ENCODE measurements at regions of chr12 and their contacts with region 1.

Region 1: GRCh38 chr12:68807576-68808387 is at the start of gene MDM2:
- DNase-seq: peak; percentile 88
- H3K4me3 ChIP-seq: peak within 1 kb of the TSS; percentile 69 to 98 (median 81)
- H3K27ac ChIP-seq: peak within 1 kb of the TSS; percentile 97
- H3K4me1 ChIP-seq: peaks cover 25% of the 10 kb centered on the region
- H3K27me3 ChIP-seq: no peaks in the 10 kb centered on the region
- CTCF ChIP-seq: peak; percentile 26 to 65
- total RNA-seq, gene MDM2: 304 to 321 TPM

Region 2: DNA sequence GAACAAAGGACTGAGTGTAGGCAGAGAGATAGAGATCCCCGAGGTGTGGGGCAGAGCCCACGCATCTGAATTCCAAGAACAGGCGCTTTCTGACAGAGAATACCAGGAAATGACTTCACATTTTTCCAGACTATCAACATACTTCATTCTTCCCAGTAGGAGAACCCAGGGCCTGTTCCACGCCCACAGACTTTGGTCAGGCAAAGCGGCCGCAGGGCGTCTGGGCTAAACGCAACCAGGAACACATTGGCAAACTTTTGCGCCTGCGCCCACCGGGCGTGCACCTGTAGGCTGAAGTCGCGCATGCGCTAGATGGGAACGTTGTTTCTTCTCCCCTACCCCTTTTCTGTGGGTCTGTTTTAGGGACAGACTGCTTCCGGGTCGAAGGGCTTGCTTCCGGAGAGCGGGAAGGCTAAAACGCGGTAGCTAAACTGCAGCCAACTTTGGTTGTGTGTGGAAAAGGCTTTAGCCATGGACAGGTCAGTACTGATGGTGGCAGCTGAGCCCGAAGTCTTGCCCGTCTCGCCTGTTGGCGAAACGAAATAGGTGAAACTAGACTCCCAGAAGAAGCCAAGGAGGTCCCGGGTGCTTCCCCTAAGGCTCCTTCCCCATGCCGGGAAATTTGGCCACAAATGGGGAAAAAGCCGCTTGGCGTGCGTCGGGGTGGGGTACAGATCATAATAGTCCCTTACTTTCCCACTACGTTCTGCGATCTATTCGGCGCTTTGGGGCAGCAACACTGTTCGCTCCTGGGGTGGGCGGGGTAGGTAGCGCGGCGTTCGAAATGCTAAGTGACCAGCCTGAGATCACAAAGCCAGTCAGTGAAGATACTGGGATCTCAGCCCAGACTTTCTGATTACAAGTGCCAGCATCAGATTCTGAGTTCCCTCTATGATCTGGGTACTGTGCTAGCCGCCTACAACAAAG is 120.9 kb before region 1 on chr12 and contains the start of gene NUP107:
- CTCF ChIA-PET with region 1: no interaction called
- dilution Hi-C with region 1: no loop called
- in situ Hi-C with region 1: no loop called
- intact Hi-C with region 1: loop called (anchors 1 kb)
- DNase-seq: peak; percentile 98
- H3K4me3 ChIP-seq: peak within 1 kb of the TSS; percentile 73 to 90 (median 89)
- H3K27ac ChIP-seq: peak within 1 kb of the TSS; percentile 91
- H3K4me1 ChIP-seq: peaks cover 17% of the 10 kb centered on the region
- H3K27me3 ChIP-seq: no peaks in the 10 kb centered on the region
- CTCF ChIP-seq: peak in 1 of 2 donors; percentile 39
- total RNA-seq, gene NUP107: 40.8 to 52.3 TPM

Region 3: DNA sequence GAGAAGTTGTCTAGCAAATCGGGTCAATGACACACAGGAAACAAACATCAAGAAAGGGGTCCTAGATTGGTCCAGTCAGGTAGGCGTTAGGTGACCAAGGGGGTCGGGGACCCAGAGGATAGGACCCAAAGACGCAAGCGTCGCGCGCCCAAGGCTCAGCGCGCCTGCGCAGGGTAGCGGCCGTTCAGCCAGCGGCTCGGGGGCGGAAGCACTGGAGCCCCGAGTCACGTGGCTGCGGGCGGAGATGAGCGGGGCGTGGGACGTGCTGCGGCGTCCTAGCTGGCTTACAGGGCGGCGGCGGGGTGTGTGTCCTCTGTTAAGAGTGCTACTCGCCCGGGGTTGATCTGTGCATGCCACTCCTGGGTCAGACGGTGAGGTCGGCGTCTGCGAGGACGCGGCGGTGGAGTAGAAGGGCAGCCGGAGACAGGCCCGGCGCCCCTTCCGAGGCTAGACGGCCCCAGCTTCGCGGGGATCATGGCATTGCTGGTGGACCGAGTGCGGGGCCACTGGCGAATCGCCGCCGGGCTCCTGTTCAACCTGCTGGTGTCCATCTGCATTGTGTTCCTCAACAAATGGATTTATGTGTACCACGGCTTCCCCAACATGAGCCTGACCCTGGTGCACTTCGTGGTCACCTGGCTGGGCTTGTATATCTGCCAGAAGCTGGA is 61.7 kb before region 1 on chr12 and contains the start of gene SLC35E3:
- CTCF ChIA-PET with region 1: no interaction called
- dilution Hi-C with region 1: no loop called
- in situ Hi-C with region 1: loop called in 1 of 2 experiments (anchors 10 kb)
- intact Hi-C with region 1: loop called (anchors 1 kb)
- DNase-seq: peak; percentile 89
- H3K4me3 ChIP-seq: peak within 1 kb of the TSS; percentile 63 to 90 (median 85)
- H3K27ac ChIP-seq: peak within 1 kb of the TSS; percentile 62
- H3K4me1 ChIP-seq: peaks cover 14% of the 10 kb centered on the region
- H3K27me3 ChIP-seq: no peaks in the 10 kb centered on the region
- CTCF ChIP-seq: no peak
- total RNA-seq, gene SLC35E3: 5.5 to 12.4 TPM

Region 4: GRCh38 chr12:68759852-68760251 is 47.9 kb before region 1 on chr12:
- CTCF ChIA-PET with region 1: no interaction called
- dilution Hi-C with region 1: no loop called
- in situ Hi-C with region 1: loop called in 1 of 2 experiments (anchors 10 kb)
- intact Hi-C with region 1: loop called (anchors 5 kb)
- DNase-seq: no peak
- H3K4me3 ChIP-seq: no peak overlapping the region
- H3K27ac ChIP-seq: no peak overlapping the region
- H3K4me1 ChIP-seq: no peaks in the 10 kb centered on the region
- H3K27me3 ChIP-seq: no peaks in the 10 kb centered on the region
- CTCF ChIP-seq: no peak

Region 5: DNA sequence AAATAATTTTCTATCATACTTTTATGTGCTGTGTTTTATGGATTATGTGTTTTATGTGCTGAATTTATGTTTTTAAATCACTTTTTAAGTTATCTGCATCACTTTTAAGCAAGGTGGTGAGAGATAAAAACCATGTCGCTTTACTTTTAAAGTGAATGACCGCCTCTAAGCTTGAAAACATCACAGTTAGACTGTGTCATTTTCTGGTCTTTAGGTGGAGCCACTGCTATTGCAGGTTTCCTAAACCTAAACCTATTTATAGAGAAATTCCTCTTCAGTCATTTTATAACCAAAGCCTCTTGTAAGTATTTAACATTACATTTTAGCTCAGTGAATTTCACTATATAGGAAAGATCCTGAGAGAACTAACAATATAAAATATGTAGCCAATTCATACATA is 20.9 kb before region 1 on chr12:
- CTCF ChIA-PET with region 1: interaction called, 20 read pairs
- dilution Hi-C with region 1: no loop called
- in situ Hi-C with region 1: no loop called
- intact Hi-C with region 1: loop called (anchors 1 kb)
- DNase-seq: no peak
- H3K4me3 ChIP-seq: no peak overlapping the region
- H3K27ac ChIP-seq: peak overlapping the region; percentile 80
- H3K4me1 ChIP-seq: peaks cover 47% of the 10 kb centered on the region
- H3K27me3 ChIP-seq: no peaks in the 10 kb centered on the region
- CTCF ChIP-seq: peak in 1 of 2 donors; percentile 16

Region 6: DNA sequence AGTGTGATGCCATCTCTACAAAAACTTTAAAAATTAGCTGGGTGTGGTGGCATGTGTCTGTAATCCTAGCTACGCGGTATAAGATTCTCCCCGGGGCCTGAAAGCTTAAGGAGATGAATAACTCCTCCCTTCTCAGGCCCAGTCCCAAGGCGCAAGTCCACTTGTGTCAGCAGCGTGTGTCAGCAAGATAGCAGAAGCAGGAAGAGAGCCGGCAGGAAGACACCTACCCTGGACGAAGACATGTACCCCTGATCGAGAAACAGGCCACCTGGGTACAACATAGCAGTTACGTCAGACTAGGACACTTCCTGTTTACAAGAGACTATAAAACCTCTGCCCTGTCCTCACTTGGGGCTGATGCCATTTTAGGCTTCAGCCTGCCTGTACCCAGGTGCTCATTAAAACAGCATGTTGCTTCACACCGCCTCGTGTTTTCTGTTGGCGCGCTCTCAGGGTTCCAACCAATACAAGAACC is 81.9 kb after region 1 on chr12:
- CTCF ChIA-PET with region 1: no interaction called
- dilution Hi-C with region 1: no loop called
- in situ Hi-C with region 1: no loop called
- intact Hi-C with region 1: no loop called
- DNase-seq: no peak
- H3K4me3 ChIP-seq: no peak overlapping the region
- H3K27ac ChIP-seq: no peak overlapping the region
- H3K4me1 ChIP-seq: no peaks in the 10 kb centered on the region
- H3K27me3 ChIP-seq: peaks cover 2% of the 10 kb centered on the region
- CTCF ChIP-seq: no peak

Region 7: GRCh38 chr12:69039894-69040293 is 232.1 kb after region 1 on chr12:
- CTCF ChIA-PET with region 1: no interaction called
- dilution Hi-C with region 1: no loop called
- in situ Hi-C with region 1: no loop called
- intact Hi-C with region 1: no loop called
- DNase-seq: no peak
- H3K4me3 ChIP-seq: no peak overlapping the region
- H3K27ac ChIP-seq: no peak overlapping the region
- H3K4me1 ChIP-seq: peaks cover 5% of the 10 kb centered on the region
- H3K27me3 ChIP-seq: no peaks in the 10 kb centered on the region
- CTCF ChIP-seq: no peak